ENCODE measurements at regions of chr2 and their contacts with region 1.

Region 1: DNA sequence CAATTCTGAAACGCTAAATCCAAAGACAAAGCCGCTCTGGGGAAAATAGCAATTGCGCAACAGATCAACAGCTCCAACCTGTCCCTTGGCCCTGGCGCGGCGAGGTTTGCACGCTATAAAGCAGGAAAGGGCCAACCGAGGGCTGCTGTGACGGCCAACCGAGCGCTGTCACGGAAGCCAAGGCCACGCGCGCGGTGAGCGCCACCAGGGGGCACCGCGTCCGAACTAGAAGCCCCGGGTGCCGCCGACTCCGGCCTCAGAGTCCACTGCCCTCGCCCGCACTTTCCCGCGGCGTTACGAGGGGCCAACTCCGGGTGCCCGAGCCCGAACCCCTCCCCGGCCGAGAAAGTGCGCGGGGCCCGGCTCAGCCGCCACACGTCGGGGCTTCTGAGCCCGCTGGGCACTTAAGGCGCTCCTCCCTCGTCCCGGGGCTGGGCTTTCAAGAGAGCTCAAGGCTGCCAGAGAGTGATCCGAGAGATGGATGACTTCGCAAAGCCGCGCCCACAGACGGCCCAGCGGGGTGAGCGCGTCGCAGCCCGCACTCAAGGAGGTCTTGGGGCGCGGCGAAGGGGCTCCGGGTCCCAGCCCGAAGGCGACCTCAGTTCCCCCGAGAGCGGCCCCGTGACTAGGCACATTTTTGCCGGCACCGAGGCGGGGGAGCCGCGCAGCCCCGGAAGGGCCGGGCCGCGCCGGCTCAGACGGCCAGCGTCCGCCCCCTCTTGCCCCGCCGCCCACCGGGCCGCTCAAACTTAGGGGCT is 897 bp downstream of the NFE2L2 start:
- DNase-seq: peak; percentile 97 to 99 (median 98)
- ATAC-seq: peak; percentile 71 to 86 (median 78)
- H3K4me3 ChIP-seq: peak overlapping the region; percentile 85 to 99 (median 95)
- H3K27ac ChIP-seq: peak overlapping the region; percentile 97 to 100 (median 100)
- H3K4me1 ChIP-seq: peaks cover 27 to 39% (median 29%) of the 10 kb centered on the region in 3 donors
- H3K27me3 ChIP-seq: no peaks in the 10 kb centered on the region
- CTCF ChIP-seq: peak; percentile 59 to 85 (median 80)

Region 2: DNA sequence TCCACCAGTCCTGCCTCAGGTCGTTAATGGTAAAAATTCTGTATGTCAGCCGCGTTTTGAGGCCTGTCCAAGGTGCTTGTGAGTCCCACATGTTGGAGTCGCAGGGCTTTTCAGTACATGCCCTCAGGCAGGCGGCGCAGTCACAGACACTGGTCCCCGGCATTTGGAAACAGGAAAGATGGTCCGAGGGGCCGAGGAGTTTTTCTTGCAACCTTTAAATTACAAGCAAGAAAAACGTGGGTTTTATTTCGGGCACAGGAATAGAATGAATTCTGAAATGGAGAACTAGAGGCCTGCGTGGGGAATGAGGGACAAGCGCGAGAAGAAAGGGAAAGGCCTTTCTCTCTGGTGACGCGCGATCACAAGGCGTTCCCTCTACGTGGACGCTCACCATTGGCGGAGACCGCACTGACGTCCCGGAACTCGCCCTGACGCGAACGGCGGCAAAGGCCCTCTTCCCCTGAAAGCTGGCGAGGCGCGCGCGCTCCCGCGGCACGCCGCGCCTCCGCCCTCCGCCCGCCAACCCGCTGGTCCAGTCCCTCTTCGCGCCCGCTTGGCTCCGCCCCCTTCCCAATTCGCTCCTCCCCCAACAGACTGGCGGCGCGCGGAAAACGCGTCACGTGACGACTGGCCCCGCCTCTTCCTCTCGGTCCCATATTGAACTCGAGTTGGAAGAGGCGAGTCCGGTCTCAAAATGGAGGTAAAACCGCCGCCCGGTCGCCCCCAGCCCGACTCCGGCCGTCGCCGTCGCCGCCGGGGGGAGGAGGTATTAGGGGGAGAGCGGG is 51.3 kb before region 1 on chr2 and contains the start of gene HNRNPA3:
- intact Hi-C with region 1: loop called in 1 of 3 experiments (anchors 5 kb)
- DNase-seq: peak; percentile 99 to 100 (median 100)
- ATAC-seq: peak; percentile 91 to 94 (median 91)
- H3K4me3 ChIP-seq: peak within 1 kb of the TSS; percentile 57 to 84 (median 84)
- H3K27ac ChIP-seq: peak within 1 kb of the TSS; percentile 97 to 100 (median 100)
- H3K4me1 ChIP-seq: peaks cover 4 to 41% (median 8%) of the 10 kb centered on the region in 3 donors
- H3K27me3 ChIP-seq: no peaks in the 10 kb centered on the region
- CTCF ChIP-seq: no peak
- total RNA-seq, gene HNRNPA3: 30.3 to 79.1 (median 65.3) TPM